Activated CD4-positive, alpha-beta memory T cell treated with anti-CD3 and anti-CD28 coated beads for 36 hours (primary cell): ENCODE measurements at regions of chr20 and their contacts with region 1.

Region 1: DNA sequence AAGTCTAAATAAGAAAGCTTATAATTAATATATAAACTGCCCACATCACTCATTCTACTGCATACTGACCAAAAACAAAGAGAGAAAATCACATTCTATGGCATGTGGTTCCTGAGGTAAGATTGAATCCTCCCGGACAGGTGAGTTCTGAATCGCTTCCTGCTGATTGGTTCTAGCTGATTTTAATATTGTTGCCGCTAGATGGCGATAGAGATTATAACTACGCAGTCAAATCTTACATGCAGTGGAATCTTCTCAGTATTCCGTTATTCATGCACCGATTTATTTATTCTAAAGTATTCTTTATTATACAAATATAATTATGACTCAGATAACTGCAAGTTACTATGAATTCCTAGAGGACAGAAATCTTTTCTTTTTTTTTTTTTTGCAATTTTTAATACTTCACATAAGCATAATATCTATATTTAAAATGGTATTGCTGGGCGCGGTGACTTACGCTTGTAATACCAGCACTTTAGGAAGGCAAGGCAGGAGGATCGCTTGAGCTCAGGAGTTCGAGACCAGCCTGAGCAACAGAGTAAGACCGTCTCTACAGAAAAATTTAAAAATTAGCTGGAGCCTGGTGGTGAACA is 24.2 kb upstream of the TMX4 start:
- DNase-seq: no peak
- H3K4me3 Mint-ChIP-seq: no peak overlapping the region
- H3K27ac Mint-ChIP-seq: no peak overlapping the region
- H3K4me1 Mint-ChIP-seq: peaks cover 2% of the 10 kb centered on the region
- H3K27me3 Mint-ChIP-seq: peaks cover 11% of the 10 kb centered on the region

Region 2: DNA sequence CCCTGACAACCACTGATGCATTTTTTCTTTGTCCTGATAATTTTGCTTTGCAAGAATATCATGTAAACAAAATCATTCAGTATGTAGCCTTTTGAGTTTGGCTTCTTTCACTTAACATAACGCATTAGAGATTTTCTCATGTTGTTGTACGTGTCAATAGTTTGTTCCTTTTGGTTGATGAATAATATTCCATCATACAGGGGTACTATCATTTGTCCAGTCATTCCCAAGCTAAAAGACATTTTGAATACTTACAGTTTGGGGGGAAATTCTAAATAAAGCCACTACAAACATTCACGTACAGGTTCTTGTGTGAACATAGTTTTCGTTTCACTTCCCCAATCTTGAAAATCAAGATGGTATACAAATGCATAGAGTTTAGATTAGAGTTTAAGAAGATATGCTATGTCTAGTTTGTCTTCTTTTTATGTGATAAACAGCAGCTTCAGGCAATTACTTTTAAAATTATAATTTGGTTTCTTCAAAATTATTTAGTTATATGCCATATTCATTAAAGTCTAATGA is 108.7 kb before region 1 on chr20:
- CTCF ChIA-PET with region 1: interaction called, 9 read pairs
- POLR2A ChIA-PET with region 1: no interaction called
- intact Hi-C with region 1: loop called (anchors 5 kb)
- DNase-seq: no peak
- H3K4me3 Mint-ChIP-seq: no peak overlapping the region
- H3K27ac Mint-ChIP-seq: no peak overlapping the region
- H3K4me1 Mint-ChIP-seq: no peaks in the 10 kb centered on the region
- H3K27me3 Mint-ChIP-seq: peaks cover 11% of the 10 kb centered on the region

Region 3: GRCh38 chr20:8019246-8019997 is 24.4 kb before region 1 on chr20 and contains the start of gene TMX4:
- CTCF ChIA-PET with region 1: interaction called, 14 read pairs
- POLR2A ChIA-PET with region 1: no interaction called
- intact Hi-C with region 1: no loop called
- DNase-seq: peak; percentile 95
- H3K4me3 Mint-ChIP-seq: peak within 1 kb of the TSS; percentile 93
- H3K27ac Mint-ChIP-seq: peak within 1 kb of the TSS; percentile 87
- H3K4me1 Mint-ChIP-seq: peaks cover 30% of the 10 kb centered on the region
- H3K27me3 Mint-ChIP-seq: no peaks in the 10 kb centered on the region
- total RNA-seq, gene TMX4: 33.2 to 35.9 TPM

Region 4: GRCh38 chr20:8082025-8082424 is 38.2 kb after region 1 on chr20:
- CTCF ChIA-PET with region 1: no interaction called
- POLR2A ChIA-PET with region 1: no interaction called
- intact Hi-C with region 1: no loop called
- DNase-seq: no peak
- H3K4me3 Mint-ChIP-seq: no peak overlapping the region
- H3K27ac Mint-ChIP-seq: no peak overlapping the region
- H3K4me1 Mint-ChIP-seq: no peaks in the 10 kb centered on the region
- H3K27me3 Mint-ChIP-seq: no peaks in the 10 kb centered on the region

Region 5: DNA sequence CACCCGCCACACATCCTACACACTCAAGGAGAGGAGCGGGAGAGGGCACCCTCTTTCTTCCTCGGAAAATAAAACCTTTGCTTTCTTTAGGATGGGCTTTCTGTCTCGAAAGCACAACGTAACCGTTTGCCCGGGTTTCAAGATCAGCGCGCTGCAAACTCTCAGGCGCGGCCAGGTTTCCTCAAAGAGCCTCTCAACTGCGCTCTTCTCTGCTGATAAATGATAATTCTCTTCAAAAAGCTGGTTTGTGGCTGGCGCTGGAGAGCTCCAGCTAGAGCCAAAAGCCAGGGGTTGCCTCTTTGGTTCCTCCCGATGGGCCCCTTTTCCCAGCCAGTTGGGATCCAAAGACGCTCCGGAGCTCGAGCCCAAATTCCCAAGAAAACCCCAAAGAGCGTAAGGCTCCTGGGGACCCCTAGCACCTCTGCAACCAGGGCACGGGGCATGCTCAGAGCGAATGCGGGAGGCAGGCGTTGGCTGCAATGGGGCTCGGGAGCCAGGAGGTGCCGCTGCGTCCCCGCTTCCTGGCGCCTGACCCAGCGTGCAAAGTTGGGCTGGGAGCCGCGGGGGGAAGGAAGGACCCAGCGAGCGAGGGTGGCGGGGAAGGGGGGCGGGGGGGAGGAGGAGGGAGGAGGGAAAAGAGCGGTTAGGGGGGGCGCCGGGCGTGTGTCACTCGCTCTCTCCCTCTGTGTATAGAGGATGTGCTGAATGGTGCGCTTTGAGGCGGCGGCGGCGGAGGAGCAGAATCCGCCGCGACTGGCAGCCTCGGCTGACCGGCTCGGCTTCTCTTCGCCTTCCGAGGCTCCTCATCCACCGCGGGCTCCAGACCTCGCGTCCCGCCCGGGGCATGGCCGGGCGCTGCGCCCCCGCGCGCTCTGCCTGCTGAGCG is 88.1 kb after region 1 on chr20 and contains the start of gene PLCB1:
- CTCF ChIA-PET with region 1: interaction called, 15 read pairs
- POLR2A ChIA-PET with region 1: no interaction called
- intact Hi-C with region 1: loop called (anchors 10 kb)
- DNase-seq: peak; percentile 85
- H3K4me3 Mint-ChIP-seq: peak within 1 kb of the TSS; percentile 76
- H3K27ac Mint-ChIP-seq: no peak within 1 kb of the TSS
- H3K4me1 Mint-ChIP-seq: peaks cover 17% of the 10 kb centered on the region
- H3K27me3 Mint-ChIP-seq: peaks cover 33% of the 10 kb centered on the region
- total RNA-seq, gene PLCB1: 3.9 to 4.0 TPM

Region 6: GRCh38 chr20:8305449-8305978 is 261.7 kb after region 1 on chr20:
- CTCF ChIA-PET with region 1: interaction called, 10 read pairs
- POLR2A ChIA-PET with region 1: no interaction called
- intact Hi-C with region 1: loop called (anchors 2 kb)
- DNase-seq: peak; percentile 75
- H3K4me3 Mint-ChIP-seq: no peak overlapping the region
- H3K27ac Mint-ChIP-seq: no peak overlapping the region
- H3K4me1 Mint-ChIP-seq: peaks cover 6% of the 10 kb centered on the region
- H3K27me3 Mint-ChIP-seq: no peaks in the 10 kb centered on the region

Region 7: DNA sequence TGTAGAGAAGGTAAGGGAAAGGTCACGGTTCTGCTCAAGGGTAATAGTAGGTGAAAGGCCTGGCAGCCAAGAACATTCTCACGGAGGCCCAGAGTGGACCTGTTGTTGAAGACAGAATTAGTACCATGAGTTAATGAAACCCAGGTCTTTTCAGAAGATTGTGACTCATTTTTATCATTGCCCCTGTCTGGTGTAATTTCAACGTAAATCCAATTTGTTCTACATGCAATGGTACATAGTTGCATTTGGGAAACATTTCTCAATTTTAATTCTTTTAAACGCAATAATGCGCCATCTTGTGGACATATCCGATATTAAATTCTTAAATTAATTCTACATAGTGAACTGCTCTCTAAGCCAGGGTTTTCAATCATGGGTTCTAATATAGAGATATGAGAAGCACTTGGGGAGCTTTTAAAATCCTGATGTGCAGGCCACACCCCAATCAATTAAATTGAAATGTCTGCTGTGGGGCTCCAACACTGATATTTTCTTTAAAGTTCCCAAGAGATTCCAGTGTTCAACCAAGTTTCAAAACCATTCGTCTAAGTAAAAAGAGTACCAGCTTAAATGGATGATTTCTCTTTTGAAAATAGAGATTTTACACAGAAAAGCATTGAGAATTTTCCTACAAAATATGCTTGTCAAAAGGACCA is 345.7 kb after region 1 on chr20:
- CTCF ChIA-PET with region 1: interaction called, 64 read pairs
- POLR2A ChIA-PET with region 1: no interaction called
- intact Hi-C with region 1: loop called (anchors 5 kb)
- DNase-seq: no peak
- H3K4me3 Mint-ChIP-seq: no peak overlapping the region
- H3K27ac Mint-ChIP-seq: no peak overlapping the region
- H3K4me1 Mint-ChIP-seq: no peaks in the 10 kb centered on the region
- H3K27me3 Mint-ChIP-seq: no peaks in the 10 kb centered on the region